Thyroid gland (tissue), 4 donors: ENCODE measurements at regions of chrX and their contacts with region 1.

Region 1: GRCh38 chrX:41084044-41084892 is 977 bp upstream of the USP9X start:
- DNase-seq: peak; percentile 96
- H3K4me3 ChIP-seq: peak overlapping the region in 2 of 3 donors; percentile 51 to 96
- H3K27ac ChIP-seq: peak overlapping the region; percentile 97 to 99 (median 99)
- H3K4me1 ChIP-seq: peaks cover 6 to 13% of the 10 kb centered on the region in 2 donors
- H3K27me3 ChIP-seq: no peaks in the 10 kb centered on the region
- CTCF ChIP-seq: peak in 1 of 6 experiments; percentile 40
- POLR2A ChIP-seq: peak in 1 of 2 donors; percentile 87

Region 2: GRCh38 chrX:41333744-41334259 is 249.5 kb after region 1 on chrX and contains the start of gene DDX3X:
- intact Hi-C with region 1: loop called (anchors 10 kb)
- DNase-seq: peak; percentile 72 to 75
- H3K4me3 ChIP-seq: peak within 1 kb of the TSS; percentile 53 to 98 (median 93)
- H3K27ac ChIP-seq: peak within 1 kb of the TSS; percentile 100
- H3K4me1 ChIP-seq: peaks cover 20 to 38% of the 10 kb centered on the region in 2 donors
- H3K27me3 ChIP-seq: no peaks in the 10 kb centered on the region
- CTCF ChIP-seq: peak in 3 of 6 experiments; percentile 27 to 39 (median 32)
- POLR2A ChIP-seq: peak; percentile 98 to 99
- total RNA-seq, gene DDX3X: 208 to 295 (median 278) TPM

Region 3: GRCh38 chrX:41412261-41413081 is 328.2 kb after region 1 on chrX:
- intact Hi-C with region 1: no loop called
- DNase-seq: peak; percentile 6 to 8
- H3K4me3 ChIP-seq: no peak overlapping the region
- H3K27ac ChIP-seq: no peak overlapping the region
- H3K4me1 ChIP-seq: no peaks in the 10 kb centered on the region
- H3K27me3 ChIP-seq: no peaks in the 10 kb centered on the region
- CTCF ChIP-seq: no peak
- POLR2A ChIP-seq: no peak